ENCODE measurements at regions of chr11 and their contacts with region 1.

Region 1: DNA sequence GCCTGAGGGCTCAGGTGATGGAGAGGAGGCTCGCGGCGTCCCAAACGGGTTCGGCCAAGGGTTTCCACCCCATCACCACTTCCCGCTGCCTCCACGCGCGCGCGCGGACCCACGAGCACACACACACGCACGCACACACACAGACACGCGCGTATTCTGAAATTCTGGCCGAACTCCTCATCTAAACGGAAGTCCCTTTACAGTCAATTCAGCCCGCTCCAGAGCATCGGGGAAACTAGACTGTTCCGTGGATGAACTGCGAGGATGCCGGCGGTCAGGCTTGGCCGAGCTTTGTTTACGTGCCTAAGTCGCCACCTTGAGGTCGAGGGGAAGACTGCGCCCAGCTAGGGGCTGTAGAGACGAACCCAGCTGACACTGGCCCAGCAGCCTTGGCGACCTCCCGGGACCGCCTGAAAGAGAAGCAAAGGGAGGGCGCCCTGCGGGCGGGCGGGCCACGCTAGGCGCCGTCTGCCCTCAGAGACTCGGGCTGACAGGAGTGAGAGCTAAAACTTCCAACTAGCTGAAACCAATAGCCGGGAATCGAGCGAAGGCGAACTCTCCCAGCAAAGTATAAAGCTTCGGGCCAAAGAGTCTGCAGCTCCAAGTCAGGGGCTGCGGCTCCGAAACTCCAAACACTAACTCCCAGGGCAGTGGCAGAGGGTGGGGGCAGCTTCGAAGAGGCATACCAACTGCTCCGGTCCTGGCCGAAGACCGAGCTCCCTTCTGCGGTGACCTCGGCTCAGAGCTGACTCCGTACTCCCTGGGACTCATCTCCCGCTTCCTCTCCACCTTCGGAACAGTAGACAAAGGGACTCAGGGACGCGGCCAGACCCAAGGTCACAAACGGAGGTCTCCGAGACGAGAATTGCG is 124.7 kb upstream of the C11orf58 start:
- DNase-seq: peak; percentile 48
- H3K4me3 Mint-ChIP-seq: peak overlapping the region; percentile 68
- H3K27ac Mint-ChIP-seq: peak overlapping the region; percentile 18
- H3K4me1 Mint-ChIP-seq: peaks cover 18% of the 10 kb centered on the region
- H3K27me3 Mint-ChIP-seq: peaks cover 50% of the 10 kb centered on the region

Region 2: DNA sequence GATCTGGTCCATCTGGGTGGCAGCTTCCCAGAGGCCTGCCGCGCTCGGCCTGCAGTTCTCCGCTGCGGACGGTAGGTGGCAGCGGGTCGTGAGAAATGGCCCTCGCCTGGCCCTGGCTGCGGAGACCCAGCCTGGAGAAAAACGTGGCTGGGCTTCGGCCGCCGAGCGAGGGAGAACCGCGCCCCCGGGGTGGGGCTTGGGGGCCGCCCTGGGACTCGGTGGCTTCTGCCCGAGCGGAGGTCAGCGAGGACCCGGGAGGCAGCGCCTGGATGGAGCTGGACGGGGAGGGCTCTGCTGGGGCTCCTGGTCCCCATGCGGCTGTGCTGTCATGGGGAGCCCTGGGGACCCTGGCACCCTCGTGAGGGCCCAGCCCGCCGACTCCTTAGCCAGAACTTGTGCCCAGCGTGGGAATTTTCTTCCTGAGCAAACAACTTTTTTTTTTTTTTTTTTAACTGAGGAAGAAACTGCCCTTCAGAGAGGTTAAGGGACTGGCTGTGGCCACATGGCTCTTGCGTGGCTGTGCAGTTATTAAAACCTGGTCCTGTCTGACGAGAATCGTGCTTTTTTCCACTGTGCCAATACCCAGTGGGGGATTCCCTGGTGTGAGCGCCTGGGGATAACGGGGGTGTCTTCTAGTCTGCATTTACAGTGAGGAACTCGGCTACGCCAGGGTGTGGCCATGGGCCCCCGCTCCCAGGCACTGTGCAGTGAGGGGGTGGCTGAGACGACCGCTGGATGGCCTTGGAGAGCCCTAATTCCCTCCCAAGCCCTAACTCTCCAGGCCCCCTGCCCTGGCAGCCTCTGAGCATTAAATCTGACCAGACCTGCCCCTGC is 963.4 kb before region 1 on chr11:
- intact Hi-C with region 1: loop called (anchors 2 kb)
- DNase-seq: peak; percentile 60
- H3K4me3 Mint-ChIP-seq: no peak overlapping the region
- H3K27ac Mint-ChIP-seq: no peak overlapping the region
- H3K4me1 Mint-ChIP-seq: no peaks in the 10 kb centered on the region
- H3K27me3 Mint-ChIP-seq: peaks cover 24% of the 10 kb centered on the region

Region 3: DNA sequence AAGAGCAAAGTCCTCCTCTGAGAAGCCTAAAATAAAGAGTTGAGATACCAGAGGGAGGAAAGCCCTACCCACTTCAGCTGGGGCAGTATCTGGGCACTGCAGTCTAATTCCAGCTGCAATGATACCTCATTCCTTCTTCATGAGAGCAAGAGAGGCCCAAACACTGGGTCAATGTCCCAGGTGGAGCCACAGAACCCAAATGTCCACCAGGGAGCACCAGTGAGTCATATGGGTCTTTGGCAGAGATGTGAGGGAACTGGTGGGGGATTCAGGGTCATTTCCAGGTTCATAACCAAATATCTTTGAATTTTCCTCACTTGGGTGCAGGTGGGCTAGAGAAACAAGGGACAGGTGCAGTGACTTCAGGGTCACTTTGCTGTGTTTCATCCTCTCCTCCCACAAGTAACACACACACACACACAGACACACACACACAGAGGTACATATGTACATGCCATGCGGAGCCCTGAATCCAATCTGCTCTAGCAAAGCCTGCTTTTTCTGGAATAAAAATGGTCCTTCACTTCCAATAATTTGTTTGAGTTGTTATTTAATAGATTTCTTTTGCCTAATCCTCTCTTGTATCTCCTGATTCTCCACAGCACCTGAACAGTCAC is 842.8 kb before region 1 on chr11:
- intact Hi-C with region 1: loop called (anchors 5 kb)
- DNase-seq: no peak
- H3K4me3 Mint-ChIP-seq: no peak overlapping the region
- H3K27ac Mint-ChIP-seq: no peak overlapping the region
- H3K4me1 Mint-ChIP-seq: no peaks in the 10 kb centered on the region
- H3K27me3 Mint-ChIP-seq: peaks cover under 1% of the 10 kb centered on the region

Region 4: DNA sequence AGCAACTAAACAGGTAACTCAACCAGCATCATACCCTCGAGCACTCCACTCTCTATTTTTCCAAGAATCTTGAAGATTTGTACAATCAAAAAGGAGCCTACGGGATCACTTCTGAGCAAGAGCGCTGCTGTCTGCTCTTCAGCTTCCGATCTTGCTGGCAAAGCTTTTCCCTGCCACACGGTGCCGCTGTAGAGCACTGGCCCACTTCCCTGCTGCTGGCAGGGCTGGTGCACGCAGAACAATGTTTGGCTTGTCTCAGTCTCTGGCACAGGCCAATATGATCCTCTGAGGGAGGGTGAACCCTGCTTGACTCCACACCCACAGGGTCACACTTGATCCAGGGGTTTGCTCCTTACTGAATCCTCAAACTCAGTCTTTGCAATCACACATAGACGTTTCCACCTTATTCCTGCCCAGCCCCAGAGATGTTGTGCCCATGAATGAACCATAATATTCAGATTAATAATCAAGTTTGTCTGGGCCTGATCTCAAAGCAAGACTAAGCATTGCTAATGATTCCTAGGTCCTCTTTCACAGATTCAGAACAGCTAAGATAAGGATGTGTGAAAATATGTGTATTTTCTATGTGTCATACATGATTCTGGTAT is 794.0 kb before region 1 on chr11:
- intact Hi-C with region 1: loop called (anchors 2 kb)
- DNase-seq: peak; percentile 9
- H3K4me3 Mint-ChIP-seq: no peak overlapping the region
- H3K27ac Mint-ChIP-seq: peak overlapping the region; percentile 3
- H3K4me1 Mint-ChIP-seq: peaks cover 15% of the 10 kb centered on the region
- H3K27me3 Mint-ChIP-seq: no peaks in the 10 kb centered on the region

Region 5: DNA sequence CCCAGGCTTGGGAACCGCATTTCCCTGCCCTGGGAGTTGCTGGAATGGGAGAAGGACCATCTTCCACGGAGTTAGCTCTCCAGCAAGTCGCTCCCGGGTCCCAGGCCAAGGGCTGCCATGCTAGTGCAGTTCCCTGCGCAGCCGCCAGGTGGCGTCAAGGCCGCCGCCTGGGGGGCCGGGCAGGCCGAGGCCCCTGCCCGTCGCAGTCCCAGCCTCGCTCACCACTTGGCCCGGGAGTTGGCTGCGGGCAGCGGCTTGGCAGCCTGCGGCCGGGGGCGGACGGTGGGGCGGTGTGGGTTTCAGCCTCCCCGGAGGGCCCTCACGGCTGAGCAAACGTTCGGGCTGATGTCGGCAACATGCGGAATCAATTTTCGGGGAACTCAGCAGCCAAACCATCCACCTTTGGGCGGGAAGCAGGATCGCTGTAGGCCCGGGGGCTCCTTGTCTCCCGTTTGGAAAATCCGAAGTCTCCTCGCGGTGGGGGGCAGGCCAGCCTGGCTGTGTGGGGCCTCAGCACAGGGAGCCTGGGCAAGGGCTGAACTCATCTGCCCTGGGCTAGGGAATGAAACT is 672.5 kb before region 1 on chr11:
- intact Hi-C with region 1: loop called (anchors 2 kb)
- DNase-seq: peak; percentile 4
- H3K4me3 Mint-ChIP-seq: no peak overlapping the region
- H3K27ac Mint-ChIP-seq: no peak overlapping the region
- H3K4me1 Mint-ChIP-seq: no peaks in the 10 kb centered on the region
- H3K27me3 Mint-ChIP-seq: no peaks in the 10 kb centered on the region

Region 6: GRCh38 chr11:17722000-17722643 is 1108.4 kb after region 1 on chr11:
- intact Hi-C with region 1: loop called (anchors 2 kb)
- DNase-seq: no peak
- H3K4me3 Mint-ChIP-seq: no peak overlapping the region
- H3K27ac Mint-ChIP-seq: peak overlapping the region; percentile 13
- H3K4me1 Mint-ChIP-seq: no peaks in the 10 kb centered on the region
- H3K27me3 Mint-ChIP-seq: peaks cover 33% of the 10 kb centered on the region